ENCODE measurements at regions of chr12 and their contacts with region 1.

Region 1: GRCh38 chr12:49707128-49707811 is at the start of gene FMNL3:
- DNase-seq: peak; percentile 99
- CTCF ChIP-seq: peak; percentile 91

Region 2: GRCh38 chr12:49687941-49688340 is 19.3 kb before region 1 on chr12:
- CTCF ChIA-PET with region 1: interaction called, 30 read pairs
- POLR2A ChIA-PET with region 1: interaction called, 8 read pairs
- DNase-seq: no peak
- CTCF ChIP-seq: no peak

Region 3: DNA sequence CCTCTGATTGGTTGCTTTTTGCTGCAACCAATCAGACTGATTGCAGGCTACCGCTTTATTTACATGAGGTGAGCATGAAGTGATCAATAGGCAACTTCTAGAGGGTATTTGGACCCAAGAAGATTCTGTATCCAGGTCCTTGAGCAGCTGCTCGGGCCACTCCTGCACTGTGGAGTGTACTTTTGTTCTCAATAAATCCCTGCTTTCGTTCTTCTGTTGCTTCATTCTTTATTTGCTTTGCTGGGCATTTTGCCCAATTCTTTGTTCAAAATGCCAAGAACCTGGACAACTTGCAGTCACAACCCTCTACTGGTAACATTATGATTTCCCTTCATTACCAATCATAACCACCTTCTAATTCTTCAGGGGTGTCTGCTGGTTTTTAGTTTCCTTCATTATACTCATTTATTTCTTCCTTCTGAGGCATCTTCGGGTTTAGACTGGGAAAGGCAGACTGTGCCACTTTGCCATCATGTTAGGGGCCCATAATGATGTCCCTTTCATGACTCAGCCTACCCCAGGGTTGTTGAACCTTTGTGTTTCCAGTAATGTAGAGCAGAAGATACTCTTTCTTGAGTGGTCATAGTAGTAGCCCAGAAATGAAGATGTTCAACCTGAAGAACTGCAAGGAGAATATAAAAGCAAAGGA is 619.5 kb after region 1 on chr12:
- CTCF ChIA-PET with region 1: no interaction called
- POLR2A ChIA-PET with region 1: no interaction called
- DNase-seq: no peak
- CTCF ChIP-seq: no peak